Breast epithelium (tissue), 4 donors: ENCODE measurements at regions of chr12 and their contacts with region 1.

Region 1: DNA sequence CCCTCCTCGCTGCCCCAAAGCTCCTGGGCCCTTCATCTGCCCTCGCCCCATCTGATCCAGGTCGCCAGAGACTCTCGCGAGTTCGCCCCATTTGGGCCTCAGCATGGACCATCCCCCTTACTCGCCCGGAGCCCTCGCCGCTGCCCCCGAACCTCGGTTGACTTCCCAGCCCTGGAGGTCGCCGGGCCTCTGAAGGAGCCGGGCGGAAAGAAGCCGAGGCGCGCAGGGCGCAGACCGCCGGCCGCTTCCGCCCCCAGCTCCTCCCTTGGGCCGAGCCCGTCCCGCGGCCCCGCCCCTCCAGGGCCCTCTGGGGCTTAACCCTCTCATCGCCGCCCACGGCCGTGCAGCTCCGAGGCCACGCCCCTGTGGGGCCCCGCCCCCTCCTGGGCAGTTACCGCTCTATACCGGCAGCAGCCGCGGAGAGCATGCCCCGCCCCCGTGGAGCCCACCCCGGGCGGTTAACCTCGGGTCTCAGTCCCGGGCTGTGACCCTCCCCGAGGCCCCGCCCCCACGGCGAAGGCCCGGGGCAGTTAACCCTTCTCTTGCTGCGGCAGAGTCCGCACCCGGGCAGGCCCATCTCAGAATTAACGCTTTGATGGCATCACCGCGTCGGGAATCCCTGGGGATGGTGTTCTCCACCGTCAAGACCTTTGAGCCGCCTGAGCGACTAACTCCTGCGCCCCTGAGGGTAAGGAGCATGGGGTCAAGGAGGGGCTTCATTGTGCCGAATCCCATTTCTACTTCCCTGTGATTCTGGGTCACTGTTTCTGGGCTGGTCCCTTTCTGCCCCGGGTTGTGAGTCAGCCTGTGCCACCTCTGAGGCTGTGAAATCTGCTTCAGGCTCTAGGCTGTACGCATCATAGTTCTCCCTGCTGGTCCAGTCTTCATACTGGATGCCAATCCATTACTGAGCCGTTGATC is at the start of gene SPSB2:
- DNase-seq: peak; percentile 92 to 95
- H3K4me3 ChIP-seq: peak within 1 kb of the TSS; percentile 70 to 84 (median 72)
- H3K27ac ChIP-seq: peak within 1 kb of the TSS; percentile 78 to 94
- H3K4me1 ChIP-seq: peaks cover 5 to 25% of the 10 kb centered on the region in 2 donors
- H3K27me3 ChIP-seq: no peaks in the 10 kb centered on the region
- CTCF ChIP-seq: peak in 1 of 3 donors; percentile 3
- POLR2A ChIP-seq: no peak
- total RNA-seq, gene SPSB2: 9.0 to 13.4 (median 12.7) TPM

Region 2: GRCh38 chr12:6205144-6205539 is 668.2 kb before region 1 on chr12:
- intact Hi-C with region 1: loop called (anchors 5 kb)
- DNase-seq: no peak
- H3K4me3 ChIP-seq: peak overlapping the region in 1 of 3 donors; percentile 32
- H3K27ac ChIP-seq: peak overlapping the region; percentile 95 to 98
- H3K4me1 ChIP-seq: peaks cover 0 to 19% of the 10 kb centered on the region in 2 donors
- H3K27me3 ChIP-seq: no peaks in the 10 kb centered on the region
- CTCF ChIP-seq: no peak
- POLR2A ChIP-seq: no peak

Region 3: GRCh38 chr12:6861391-6861790 is 12.0 kb before region 1 on chr12:
- intact Hi-C with region 1: no loop called
- DNase-seq: no peak
- H3K4me3 ChIP-seq: no peak overlapping the region
- H3K27ac ChIP-seq: no peak overlapping the region
- H3K4me1 ChIP-seq: no peaks in the 10 kb centered on the region
- H3K27me3 ChIP-seq: no peaks in the 10 kb centered on the region
- CTCF ChIP-seq: no peak
- POLR2A ChIP-seq: no peak